ENCODE measurements at regions of chr13 and their contacts with region 1.

Region 1: DNA sequence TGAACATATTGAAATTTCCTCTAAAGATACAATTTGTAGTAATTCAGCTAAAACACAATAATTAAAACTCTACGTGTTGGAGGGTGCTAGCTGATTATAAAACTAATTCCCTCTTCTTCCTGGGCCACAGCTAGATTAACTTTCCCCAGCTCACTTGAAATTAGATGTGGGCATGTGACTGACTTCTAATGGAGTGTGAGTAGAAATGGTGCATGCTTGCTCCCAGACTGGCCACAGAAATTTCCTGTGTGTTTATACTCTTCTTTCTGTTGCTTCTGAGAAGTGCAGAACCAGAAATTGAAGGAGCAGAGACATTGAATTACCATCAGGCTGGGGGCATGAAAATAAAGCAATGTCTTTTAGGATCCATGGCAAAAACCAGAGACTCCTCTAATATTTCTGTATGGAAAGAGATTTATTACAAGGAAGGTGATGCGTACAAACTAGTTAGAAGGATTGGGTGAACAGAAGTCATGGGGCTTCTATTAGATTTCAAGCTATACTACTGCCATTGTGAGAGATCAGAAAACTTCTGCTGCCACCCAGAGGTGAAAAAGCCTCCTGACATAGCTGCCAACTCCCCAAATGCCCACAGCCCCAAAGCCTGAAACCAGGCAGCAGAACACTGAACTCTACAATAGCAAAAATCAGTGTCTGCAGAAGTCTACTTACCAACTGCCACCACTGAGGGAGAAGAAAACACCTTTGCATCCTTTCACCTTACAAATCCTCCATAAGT is 379.2 kb upstream of the MIR17HG start:
- DNase-seq: peak; percentile 70
- H3K4me3 ChIP-seq: no peak overlapping the region
- H3K27ac ChIP-seq: no peak overlapping the region
- H3K4me1 ChIP-seq: no peaks in the 10 kb centered on the region
- CTCF ChIP-seq: no peak

Region 2: GRCh38 chr13:90943946-90944345 is 24.4 kb before region 1 on chr13:
- CTCF ChIA-PET with region 1: interaction called, 8 read pairs
- POLR2A ChIA-PET with region 1: interaction called, 7 read pairs
- intact Hi-C with region 1: loop called (anchors 1 kb)
- DNase-seq: no peak
- H3K4me3 ChIP-seq: no peak overlapping the region
- H3K27ac ChIP-seq: no peak overlapping the region
- H3K4me1 ChIP-seq: no peaks in the 10 kb centered on the region
- CTCF ChIP-seq: no peak

Region 3: DNA sequence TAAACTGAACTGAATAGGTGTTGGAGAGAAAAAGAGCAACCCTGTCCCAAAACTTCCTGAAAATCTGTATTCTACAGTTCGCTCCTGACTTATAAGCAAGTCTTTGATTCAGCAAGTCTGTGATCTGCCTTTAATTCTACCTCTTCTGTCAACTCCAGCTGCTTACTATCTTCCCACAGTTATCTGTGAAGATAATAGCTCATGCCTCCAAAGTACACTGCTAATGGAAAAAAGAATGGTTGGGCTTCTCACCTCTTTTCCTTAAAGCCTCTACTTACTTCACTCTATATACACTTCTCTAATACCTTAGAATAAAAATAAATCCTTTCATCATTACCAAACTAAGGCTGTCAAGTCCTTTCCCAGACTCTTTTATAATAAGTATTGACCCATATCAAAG is 12.3 kb before region 1 on chr13:
- CTCF ChIA-PET with region 1: interaction called, 3 read pairs
- POLR2A ChIA-PET with region 1: interaction called, 27 read pairs
- intact Hi-C with region 1: no loop called
- DNase-seq: no peak
- H3K4me3 ChIP-seq: no peak overlapping the region
- H3K27ac ChIP-seq: no peak overlapping the region
- H3K4me1 ChIP-seq: no peaks in the 10 kb centered on the region
- CTCF ChIP-seq: no peak

Region 4: DNA sequence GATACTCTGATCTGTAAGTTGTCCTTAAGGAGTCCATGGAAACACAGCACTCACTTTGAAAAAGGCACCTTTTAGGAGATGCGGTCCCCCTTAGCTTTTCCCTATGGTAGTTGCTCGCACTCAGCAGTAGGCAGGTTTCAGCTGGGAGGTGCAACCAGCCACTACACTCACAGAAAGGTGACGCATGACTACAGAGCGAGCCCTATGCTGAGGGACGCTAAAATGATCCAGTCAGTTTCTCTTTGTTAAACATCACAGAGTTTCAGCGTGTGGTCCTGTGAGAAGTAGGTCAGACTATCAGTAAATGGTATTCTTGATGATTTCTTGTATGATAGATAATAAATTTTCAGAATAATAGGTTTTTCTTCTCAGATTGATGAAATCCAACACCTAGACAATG is 16.4 kb after region 1 on chr13:
- CTCF ChIA-PET with region 1: no interaction called
- POLR2A ChIA-PET with region 1: interaction called, 11 read pairs
- intact Hi-C with region 1: no loop called
- DNase-seq: no peak
- H3K4me3 ChIP-seq: no peak overlapping the region
- H3K27ac ChIP-seq: no peak overlapping the region
- H3K4me1 ChIP-seq: no peaks in the 10 kb centered on the region
- CTCF ChIP-seq: no peak